CD4-positive, alpha-beta T cell (primary cell): ENCODE measurements at regions of chr9 and their contacts with region 1.

Region 1: DNA sequence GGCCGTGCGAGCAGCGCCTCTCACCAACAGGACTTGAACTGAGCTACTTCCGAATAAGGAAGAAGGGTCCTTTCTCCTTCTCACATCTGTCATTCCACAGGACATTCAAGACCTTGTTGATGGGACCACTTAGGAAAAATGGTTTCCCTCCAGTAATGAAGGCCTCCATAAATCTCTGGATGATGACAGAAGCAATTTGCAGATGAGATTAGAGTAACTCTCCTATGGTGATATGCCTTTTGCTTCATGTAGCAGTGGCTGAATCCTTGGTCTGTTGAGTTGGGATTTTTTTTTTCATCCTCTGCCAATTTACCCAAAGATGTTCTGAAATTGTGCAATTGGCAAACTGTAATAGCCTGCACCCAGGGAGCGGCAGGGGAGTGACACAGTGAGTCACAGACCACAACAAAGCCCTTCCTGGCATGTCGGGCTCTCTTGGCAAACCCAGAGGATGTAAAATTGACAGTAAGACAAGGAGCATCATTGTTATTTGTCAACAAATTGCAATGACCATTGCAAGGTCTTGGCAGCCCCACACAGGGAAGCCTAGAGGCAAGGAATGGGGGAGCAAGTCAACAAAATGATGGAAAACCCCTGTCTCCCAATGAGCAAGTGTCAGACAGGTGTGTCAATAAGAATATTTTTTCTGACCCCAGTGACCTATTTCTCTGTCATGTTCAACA is 275.9 kb downstream of the ACTL7B start:
- DNase-seq: peak in 2 of 14 experiments; percentile 28 to 52
- ATAC-seq: no peak
- H3K4me3 ChIP-seq: no peak overlapping the region
- H3K4me3 Mint-ChIP-seq: no peak overlapping the region
- H3K27ac ChIP-seq: no peak overlapping the region
- H3K27ac Mint-ChIP-seq: no peak overlapping the region
- H3K4me1 ChIP-seq: no peaks in the 10 kb centered on the region
- H3K4me1 Mint-ChIP-seq: no peaks in the 10 kb centered on the region
- H3K27me3 ChIP-seq: no peaks in the 10 kb centered on the region
- H3K27me3 Mint-ChIP-seq: no peaks in the 10 kb centered on the region
- CTCF ChIP-seq: no peak

Region 2: DNA sequence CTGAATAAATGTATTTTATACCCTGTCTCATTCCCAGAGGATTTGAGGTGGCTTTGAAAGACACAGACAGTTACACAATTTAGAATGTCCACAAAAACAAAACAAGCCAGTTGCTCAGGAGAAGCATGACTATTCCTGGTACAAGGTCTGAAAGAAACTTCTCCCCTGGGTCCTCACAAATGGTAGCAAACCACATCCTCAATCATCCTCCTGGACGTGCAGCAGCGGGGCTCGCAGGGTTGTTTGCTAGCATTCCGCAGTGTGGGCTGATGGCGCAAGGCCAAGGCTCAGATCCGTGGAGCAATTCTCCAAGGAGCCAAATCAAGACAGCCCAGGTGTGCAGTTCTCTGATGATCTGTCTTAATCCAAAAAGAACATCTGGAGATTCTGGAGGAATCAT is 65.6 kb after region 1 on chr9:
- CTCF ChIA-PET with region 1: no interaction called
- POLR2A ChIA-PET with region 1: no interaction called
- intact Hi-C with region 1: loop called in 1 of 2 experiments (anchors 10 kb)
- DNase-seq: no peak
- ATAC-seq: no peak
- H3K4me3 ChIP-seq: no peak overlapping the region
- H3K4me3 Mint-ChIP-seq: no peak overlapping the region
- H3K27ac ChIP-seq: no peak overlapping the region
- H3K27ac Mint-ChIP-seq: no peak overlapping the region
- H3K4me1 ChIP-seq: no peaks in the 10 kb centered on the region
- H3K4me1 Mint-ChIP-seq: no peaks in the 10 kb centered on the region
- H3K27me3 ChIP-seq: no peaks in the 10 kb centered on the region
- H3K27me3 Mint-ChIP-seq: peaks cover 4% of the 10 kb centered on the region
- CTCF ChIP-seq: no peak